ENCODE measurements at regions of chr3 and their contacts with region 1.

Region 1: DNA sequence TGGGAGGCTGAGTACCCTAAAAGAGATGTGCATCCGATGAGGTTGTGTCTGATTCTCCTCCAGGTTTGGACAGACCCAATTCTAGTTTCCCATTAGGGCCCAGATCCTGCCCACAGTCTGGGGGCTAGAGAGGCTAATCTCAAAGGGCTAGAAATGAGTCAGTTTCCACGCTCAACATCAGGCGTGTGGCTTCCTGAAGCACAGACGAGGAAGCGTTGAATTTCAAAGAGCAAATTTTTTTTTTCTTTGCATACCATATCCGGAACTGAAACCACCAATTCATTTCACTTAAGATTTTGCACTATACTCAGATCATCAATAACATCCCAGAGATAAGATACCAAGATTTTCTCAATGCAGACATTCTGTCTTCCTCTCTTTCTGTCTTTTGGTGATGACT is 173.8 kb upstream of the BCL6 start:
- DNase-seq: no peak
- H3K4me3 ChIP-seq: no peak overlapping the region
- H3K27ac ChIP-seq: no peak overlapping the region
- H3K4me1 ChIP-seq: peaks cover 14% of the 10 kb centered on the region
- H3K27me3 ChIP-seq: no peaks in the 10 kb centered on the region
- CTCF ChIP-seq: no peak
- EP300 ChIP-seq: no peak
- POLR2A ChIP-seq: no peak

Region 2: GRCh38 chr3:188041193-188041592 is 122.1 kb after region 1 on chr3:
- intact Hi-C with region 1: loop called in 1 of 4 experiments (anchors 5 kb)
- DNase-seq: no peak
- H3K4me3 ChIP-seq: no peak overlapping the region
- H3K27ac ChIP-seq: no peak overlapping the region
- H3K4me1 ChIP-seq: no peaks in the 10 kb centered on the region
- H3K27me3 ChIP-seq: no peaks in the 10 kb centered on the region
- CTCF ChIP-seq: no peak
- EP300 ChIP-seq: no peak
- POLR2A ChIP-seq: no peak

Region 3: DNA sequence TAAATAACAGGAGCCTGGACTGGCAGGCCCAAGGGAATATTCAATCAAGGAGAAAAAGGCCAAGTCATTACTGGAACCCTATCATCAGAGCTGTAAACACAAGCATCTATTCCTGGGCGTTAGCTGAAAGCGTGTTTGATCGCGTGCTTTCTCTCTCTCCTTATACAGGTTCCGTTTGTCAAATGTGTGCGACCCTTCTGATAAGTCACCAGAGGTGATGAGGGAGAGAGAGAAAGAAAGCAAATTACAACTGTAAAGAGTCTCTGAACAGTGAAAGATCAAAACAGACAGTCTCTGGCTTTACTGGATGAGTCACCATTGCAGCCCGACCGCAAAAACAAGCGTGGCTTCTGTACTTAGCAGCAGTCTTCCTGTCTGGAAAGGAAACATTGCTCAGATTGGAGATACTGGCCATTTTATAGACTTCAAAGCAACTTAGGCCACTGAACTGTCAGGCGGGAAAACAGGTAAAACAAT is 1213.2 kb after region 1 on chr3:
- intact Hi-C with region 1: loop called in 1 of 4 experiments (anchors 10 kb)
- DNase-seq: peak in 3 of 5 donors; percentile 18 to 48 (median 46)
- H3K4me3 ChIP-seq: no peak overlapping the region
- H3K27ac ChIP-seq: peak overlapping the region in 1 of 2 donors; percentile 19
- H3K4me1 ChIP-seq: no peaks in the 10 kb centered on the region
- H3K27me3 ChIP-seq: no peaks in the 10 kb centered on the region
- CTCF ChIP-seq: no peak
- EP300 ChIP-seq: no peak
- POLR2A ChIP-seq: no peak

Measured in ovary (tissue), 10 donors.